Brain microvascular endothelial cell (primary cell): ENCODE measurements at regions of chr22 and their contacts with region 1.

Region 1: DNA sequence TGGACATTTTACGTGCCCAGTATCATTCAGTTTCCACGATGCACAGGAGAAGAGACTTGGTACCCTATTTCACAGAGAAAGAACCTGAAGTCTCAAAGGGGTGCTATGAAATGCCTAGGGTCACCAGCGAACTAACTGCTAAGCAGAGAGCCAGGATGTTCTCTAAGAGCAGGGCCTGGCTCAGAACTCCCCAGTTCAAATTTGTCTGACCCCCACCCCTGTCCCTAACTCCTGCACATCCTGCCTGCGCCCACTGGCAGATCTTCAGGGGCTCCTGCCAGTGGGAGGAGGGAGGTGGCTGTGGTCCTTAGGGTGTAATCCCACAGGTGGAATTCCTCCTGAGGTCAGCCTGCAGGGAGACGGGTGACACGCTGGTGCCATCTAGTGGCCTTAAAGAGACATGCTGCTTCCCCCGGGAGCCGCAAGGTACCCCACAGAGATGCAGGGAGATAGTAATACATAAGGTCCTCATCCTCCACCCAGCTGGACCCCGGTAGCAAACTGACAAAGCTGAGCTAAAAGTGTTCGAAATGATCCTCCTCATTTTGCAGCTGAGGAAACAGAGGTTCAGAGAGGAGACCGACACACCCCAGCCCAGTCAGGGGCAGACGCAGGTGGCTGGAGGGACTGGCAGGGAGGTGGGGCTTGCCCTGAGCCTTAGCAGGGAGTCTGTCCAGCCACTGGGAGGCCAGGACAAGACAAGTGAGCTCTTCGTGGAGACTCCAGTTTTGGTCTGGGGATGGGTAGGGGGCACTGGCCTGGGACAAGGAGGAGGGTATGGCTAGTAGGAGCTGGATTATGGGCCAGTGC is 34.1 kb downstream of the MB start:
- DNase-seq: peak; percentile 35
- H3K4me3 ChIP-seq: no peak overlapping the region
- H3K27ac ChIP-seq: no peak overlapping the region
- H3K27me3 ChIP-seq: no peaks in the 10 kb centered on the region
- CTCF ChIP-seq: peak; percentile 92

Region 2: DNA sequence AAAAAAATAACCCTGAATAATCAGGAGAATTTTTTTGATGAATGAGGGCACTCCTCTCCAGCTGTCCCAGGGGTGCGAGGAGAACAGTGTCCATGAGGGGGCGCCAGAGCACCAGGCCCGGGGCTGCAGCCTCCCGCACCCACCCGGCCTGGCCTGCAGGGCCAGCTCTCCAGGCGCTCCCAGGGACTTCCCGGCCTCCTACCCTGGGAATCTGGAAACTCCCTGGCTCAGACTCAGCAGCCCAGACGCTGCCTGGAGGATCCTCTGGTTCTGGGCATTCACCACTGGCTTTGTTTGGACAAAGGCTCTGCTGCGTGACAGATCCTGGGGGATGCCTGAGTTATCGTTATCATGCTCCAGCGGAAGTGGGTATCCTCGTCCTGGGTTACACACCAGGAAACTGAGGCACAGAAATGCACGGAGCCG is 152.2 kb before region 1 on chr22:
- in situ Hi-C with region 1: loop called (anchors 25 kb)
- DNase-seq: peak; percentile 88
- H3K4me3 ChIP-seq: no peak overlapping the region
- H3K27ac ChIP-seq: peak overlapping the region; percentile 46
- H3K27me3 ChIP-seq: no peaks in the 10 kb centered on the region
- CTCF ChIP-seq: peak; percentile 93

Region 3: GRCh38 chr22:35728639-35729308 is 145.7 kb after region 1 on chr22:
- in situ Hi-C with region 1: no loop called
- DNase-seq: no peak
- H3K4me3 ChIP-seq: no peak overlapping the region
- H3K27ac ChIP-seq: no peak overlapping the region
- H3K27me3 ChIP-seq: no peaks in the 10 kb centered on the region
- CTCF ChIP-seq: no peak